Activated CD4-positive, alpha-beta T cell treated with anti-CD3 and anti-CD28 coated beads for 36 hours (primary cell): ENCODE measurements at regions of chr19 and their contacts with region 1.

Region 1: GRCh38 chr19:3324321-3324856 is 42.0 kb upstream of the NFIC start:
- DNase-seq: peak; percentile 90
- ATAC-seq: peak; percentile 90
- H3K4me3 Mint-ChIP-seq: no peak overlapping the region
- H3K27ac Mint-ChIP-seq: no peak overlapping the region
- H3K4me1 Mint-ChIP-seq: no peaks in the 10 kb centered on the region
- H3K27me3 Mint-ChIP-seq: peaks cover 22% of the 10 kb centered on the region

Region 2: DNA sequence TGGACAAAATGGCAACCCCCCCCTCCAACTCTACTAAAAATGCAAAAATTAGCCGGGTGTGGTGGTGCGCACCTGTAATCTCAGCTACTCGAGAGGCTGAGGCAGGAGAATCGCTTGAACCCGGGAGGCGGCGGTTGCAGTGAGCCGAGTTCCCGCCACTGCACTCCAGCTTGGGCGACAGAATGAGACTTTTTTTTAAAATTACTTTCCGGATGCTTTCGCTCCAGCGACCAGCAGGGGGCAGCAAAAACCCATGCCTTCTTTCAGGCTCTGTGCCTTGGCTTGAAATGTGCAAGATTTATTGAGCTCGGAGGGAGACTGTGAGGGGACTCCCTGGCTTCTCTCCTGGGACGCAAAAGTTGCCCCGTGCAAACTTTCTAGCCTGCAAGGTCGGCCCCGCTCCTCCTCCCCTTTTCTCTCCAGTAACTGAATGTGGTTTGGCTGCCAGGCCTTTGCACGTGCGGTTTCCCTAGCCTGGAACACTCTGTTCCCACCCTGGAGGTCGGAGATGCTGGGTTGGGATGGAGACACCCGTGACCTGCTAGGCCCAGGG is 19.4 kb before region 1 on chr19:
- CTCF ChIA-PET with region 1: interaction called, 6 read pairs
- POLR2A ChIA-PET with region 1: no interaction called
- intact Hi-C with region 1: loop called in 1 of 2 experiments (anchors 1 kb)
- DNase-seq: peak; percentile 89
- ATAC-seq: peak; percentile 63
- H3K4me3 Mint-ChIP-seq: no peak overlapping the region
- H3K27ac Mint-ChIP-seq: no peak overlapping the region
- H3K4me1 Mint-ChIP-seq: no peaks in the 10 kb centered on the region
- H3K27me3 Mint-ChIP-seq: peaks cover 11% of the 10 kb centered on the region

Region 3: GRCh38 chr19:3359015-3359918 is 34.9 kb after region 1 on chr19:
- CTCF ChIA-PET with region 1: no interaction called
- POLR2A ChIA-PET with region 1: no interaction called
- intact Hi-C with region 1: no loop called
- DNase-seq: peak; percentile 76
- ATAC-seq: peak; percentile 33
- H3K4me3 Mint-ChIP-seq: peak overlapping the region; percentile 73
- H3K27ac Mint-ChIP-seq: peak overlapping the region; percentile 79
- H3K4me1 Mint-ChIP-seq: peaks cover 30% of the 10 kb centered on the region
- H3K27me3 Mint-ChIP-seq: peaks cover 11% of the 10 kb centered on the region

Region 4: GRCh38 chr19:3429581-3430080 is 105.2 kb after region 1 on chr19:
- CTCF ChIA-PET with region 1: interaction called, 14 read pairs
- POLR2A ChIA-PET with region 1: no interaction called
- intact Hi-C with region 1: loop called (anchors 1 kb)
- DNase-seq: peak; percentile 86
- ATAC-seq: peak; percentile 83
- H3K4me3 Mint-ChIP-seq: no peak overlapping the region
- H3K27ac Mint-ChIP-seq: no peak overlapping the region
- H3K4me1 Mint-ChIP-seq: peaks cover 6% of the 10 kb centered on the region
- H3K27me3 Mint-ChIP-seq: no peaks in the 10 kb centered on the region

Region 5: DNA sequence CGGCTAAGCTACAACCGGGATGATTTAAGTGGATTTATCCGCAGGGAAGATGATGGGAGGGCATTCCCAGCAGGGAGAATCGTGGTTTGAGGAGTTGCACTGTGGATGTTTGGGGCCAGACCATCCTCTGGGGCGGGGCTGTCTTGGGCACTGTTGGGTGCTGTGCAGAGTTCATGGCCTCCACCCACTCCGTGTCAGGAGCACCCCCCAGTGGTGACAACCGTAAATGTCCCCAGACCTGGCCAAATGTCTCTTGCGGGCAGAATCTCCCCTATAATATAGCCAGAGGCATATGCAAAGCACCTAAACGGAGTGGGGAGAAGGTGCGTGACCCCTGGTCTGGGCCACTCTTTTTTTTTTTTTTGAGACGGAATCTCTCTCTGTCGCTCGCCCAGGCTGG is 115.7 kb after region 1 on chr19:
- CTCF ChIA-PET with region 1: interaction called, 7 read pairs
- POLR2A ChIA-PET with region 1: no interaction called
- intact Hi-C with region 1: loop called in 1 of 2 experiments (anchors 1 kb)
- DNase-seq: peak; percentile 78
- ATAC-seq: peak; percentile 55
- H3K4me3 Mint-ChIP-seq: no peak overlapping the region
- H3K27ac Mint-ChIP-seq: no peak overlapping the region
- H3K4me1 Mint-ChIP-seq: peaks cover 13% of the 10 kb centered on the region
- H3K27me3 Mint-ChIP-seq: no peaks in the 10 kb centered on the region

Region 6: GRCh38 chr19:3471954-3472655 is 147.7 kb after region 1 on chr19:
- CTCF ChIA-PET with region 1: interaction called, 5 read pairs
- POLR2A ChIA-PET with region 1: no interaction called
- intact Hi-C with region 1: loop called (anchors 1 to 2 kb)
- DNase-seq: peak; percentile 66
- ATAC-seq: peak; percentile 36
- H3K4me3 Mint-ChIP-seq: no peak overlapping the region
- H3K27ac Mint-ChIP-seq: no peak overlapping the region
- H3K4me1 Mint-ChIP-seq: no peaks in the 10 kb centered on the region
- H3K27me3 Mint-ChIP-seq: no peaks in the 10 kb centered on the region

Region 7: GRCh38 chr19:3479177-3479833 is 154.9 kb after region 1 on chr19:
- CTCF ChIA-PET with region 1: interaction called, 15 read pairs
- POLR2A ChIA-PET with region 1: no interaction called
- intact Hi-C with region 1: no loop called
- DNase-seq: peak; percentile 68
- ATAC-seq: peak; percentile 77
- H3K4me3 Mint-ChIP-seq: no peak overlapping the region
- H3K27ac Mint-ChIP-seq: no peak overlapping the region
- H3K4me1 Mint-ChIP-seq: peaks cover 9% of the 10 kb centered on the region
- H3K27me3 Mint-ChIP-seq: no peaks in the 10 kb centered on the region